ENCODE measurements at regions of chr19 and their contacts with region 1.

Region 1: DNA sequence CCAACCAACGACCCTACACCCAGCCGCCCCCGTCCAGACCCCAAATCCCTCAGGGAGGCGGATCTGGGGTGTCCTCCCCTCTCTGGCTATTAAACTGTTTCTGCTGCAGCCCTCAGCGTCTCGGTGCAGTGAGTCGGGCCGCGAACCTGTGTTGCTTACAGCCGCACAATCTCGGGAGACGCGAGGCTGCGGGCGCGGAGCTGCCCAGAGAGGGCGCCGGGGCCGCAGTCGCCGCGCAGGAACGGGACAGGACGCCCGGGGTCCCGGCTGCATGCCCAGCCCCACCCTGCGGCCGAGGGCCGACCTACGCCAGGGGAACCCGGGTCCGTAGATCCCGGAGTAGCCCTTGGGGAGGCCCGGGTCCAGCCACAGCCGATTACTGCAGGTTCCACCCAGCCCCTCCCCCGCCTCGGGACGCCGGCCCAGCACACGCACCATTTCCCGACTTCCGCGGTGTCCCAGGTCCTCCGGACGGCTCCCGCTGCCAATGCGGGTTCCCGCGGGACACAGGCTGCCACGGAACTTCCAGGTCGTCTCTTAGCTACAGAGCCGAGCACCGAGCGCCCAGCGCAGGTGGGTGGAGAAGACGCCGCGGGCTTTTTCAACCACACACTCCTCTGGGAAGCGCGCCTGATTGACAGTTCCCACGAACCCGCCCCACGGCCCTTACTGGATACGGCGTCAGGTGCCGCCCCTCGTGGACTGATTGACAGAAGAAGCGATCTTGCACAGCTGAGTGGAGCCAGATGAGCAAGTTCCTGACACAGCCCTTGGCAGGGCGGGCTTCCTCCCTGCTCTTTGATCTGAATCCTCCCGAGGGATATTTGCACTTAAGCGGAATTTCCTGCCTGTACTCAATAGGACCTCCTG is at the start of gene ZNF799:
- DNase-seq: peak; percentile 98
- H3K4me3 ChIP-seq: peak within 1 kb of the TSS; percentile 70 to 91 (median 76)
- H3K27ac ChIP-seq: peak within 1 kb of the TSS; percentile 88 to 97 (median 90)
- H3K4me1 ChIP-seq: peaks cover 0 to 14% (median 6%) of the 10 kb centered on the region in 4 donors
- H3K27me3 ChIP-seq: no peaks in the 10 kb centered on the region
- CTCF ChIP-seq: peak in 2 of 5 experiments; percentile 7 to 23
- EP300 ChIP-seq: peak; percentile 9
- POLR2A ChIP-seq: peak; percentile 71
- total RNA-seq, gene ZNF799: 5.4 to 9.4 (median 7.9) TPM

Region 2: GRCh38 chr19:12333162-12334159 is 67.4 kb before region 1 on chr19 and contains the start of gene ZNF563:
- in situ Hi-C with region 1: no loop called
- intact Hi-C with region 1: no loop called
- DNase-seq: peak; percentile 99
- H3K4me3 ChIP-seq: peak within 1 kb of the TSS; percentile 53 to 84 (median 74)
- H3K27ac ChIP-seq: peak within 1 kb of the TSS; percentile 91 to 96 (median 94)
- H3K4me1 ChIP-seq: peaks cover 5 to 38% (median 10%) of the 10 kb centered on the region in 4 donors
- H3K27me3 ChIP-seq: no peaks in the 10 kb centered on the region
- CTCF ChIP-seq: no peak
- EP300 ChIP-seq: no peak
- POLR2A ChIP-seq: peak; percentile 91
- total RNA-seq, gene ZNF563: 1.2 to 6.5 (median 3.4) TPM

Region 3: DNA sequence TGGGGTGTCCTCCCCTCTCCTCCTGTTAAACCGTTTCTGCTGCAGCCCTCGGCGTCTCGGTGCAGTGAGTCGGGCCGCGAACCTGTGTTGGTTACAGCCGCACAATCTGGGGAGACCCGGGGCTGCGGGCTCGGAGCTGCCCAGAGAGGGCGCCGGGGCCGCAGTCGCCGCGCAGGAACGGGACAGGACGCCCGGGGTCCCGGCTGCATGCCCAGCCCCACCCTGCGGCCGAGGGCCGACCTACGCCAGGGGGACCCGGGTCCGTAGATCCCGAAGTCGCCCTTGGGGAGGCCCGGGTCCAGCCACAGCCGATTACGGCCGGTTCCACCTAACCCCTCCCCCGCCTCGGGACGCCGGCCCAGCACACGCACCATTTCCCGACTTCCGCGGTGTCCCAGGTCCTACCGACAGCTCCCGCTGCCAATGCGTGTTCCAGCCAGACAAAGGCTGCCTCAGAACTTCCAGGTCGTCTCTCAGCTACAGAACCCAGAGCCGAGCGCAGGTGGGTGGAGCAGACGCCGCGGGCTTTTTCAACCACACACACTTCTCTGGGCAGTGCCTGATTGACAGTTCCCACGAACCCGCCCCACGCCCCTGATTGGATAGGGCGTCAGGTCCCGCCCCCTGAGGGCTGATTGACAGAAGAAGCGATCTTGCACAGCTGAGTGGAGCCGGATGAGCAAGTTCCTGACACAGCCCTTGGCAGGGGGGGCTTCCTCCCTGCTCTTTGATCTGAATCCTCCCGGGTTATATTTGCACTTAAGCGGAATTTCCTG is 39.9 kb after region 1 on chr19 and contains the start of gene ZNF443:
- in situ Hi-C with region 1: loop called in 1 of 4 experiments (anchors 5 kb)
- intact Hi-C with region 1: no loop called
- DNase-seq: peak; percentile 100
- H3K4me3 ChIP-seq: peak within 1 kb of the TSS; percentile 51 to 95 (median 78)
- H3K27ac ChIP-seq: peak within 1 kb of the TSS; percentile 92 to 96 (median 94)
- H3K4me1 ChIP-seq: peaks cover 0 to 8% (median 5%) of the 10 kb centered on the region in 4 donors
- H3K27me3 ChIP-seq: no peaks in the 10 kb centered on the region
- CTCF ChIP-seq: no peak
- EP300 ChIP-seq: no peak
- POLR2A ChIP-seq: peak; percentile 77
- total RNA-seq, gene ZNF443: 1.8 to 8.1 (median 7.0) TPM

Measured in transverse colon (tissue), 4 donors.